B cell (primary cell): ENCODE measurements at regions of chr3 and their contacts with region 1.

Region 1: DNA sequence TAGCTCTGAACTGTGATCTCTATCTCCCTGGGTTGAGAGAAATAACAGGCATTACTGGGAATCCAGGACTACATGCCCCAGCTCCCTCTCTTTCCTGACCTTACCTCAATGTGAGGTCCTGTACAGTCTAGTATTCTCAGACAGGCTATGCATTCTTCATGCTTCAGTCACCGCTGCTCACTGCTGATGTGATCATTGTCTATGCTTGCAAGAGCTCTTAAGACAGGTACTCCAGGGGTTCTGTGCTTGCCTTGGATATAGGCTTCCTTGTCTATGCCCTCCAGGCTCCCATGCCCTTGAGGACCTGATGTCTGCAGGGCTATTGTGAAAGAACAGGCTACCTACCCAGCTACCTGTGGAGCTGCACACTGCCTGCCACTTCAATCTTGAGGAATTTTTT is 183.6 kb downstream of the MBNL1 start:
- DNase-seq: no peak
- ATAC-seq: no peak
- H3K4me3 ChIP-seq: no peak overlapping the region
- H3K4me3 Mint-ChIP-seq: no peak overlapping the region
- H3K27ac ChIP-seq: peak overlapping the region in 1 of 2 donors; percentile 55
- H3K27ac Mint-ChIP-seq: no peak overlapping the region
- H3K4me1 ChIP-seq: no peaks in the 10 kb centered on the region
- H3K4me1 Mint-ChIP-seq: peaks cover 12% of the 10 kb centered on the region
- H3K27me3 ChIP-seq: no peaks in the 10 kb centered on the region
- H3K27me3 Mint-ChIP-seq: no peaks in the 10 kb centered on the region
- CTCF ChIP-seq: no peak

Region 2: GRCh38 chr3:152281133-152281713 is 171.1 kb before region 1 on chr3:
- CTCF ChIA-PET with region 1: no interaction called
- POLR2A ChIA-PET with region 1: no interaction called
- intact Hi-C with region 1: no loop called
- DNase-seq: no peak
- ATAC-seq: no peak
- H3K4me3 ChIP-seq: peak overlapping the region in 1 of 5 experiments; percentile 5
- H3K4me3 Mint-ChIP-seq: peak overlapping the region; percentile 68
- H3K27ac ChIP-seq: peak overlapping the region in 1 of 2 donors; percentile 73
- H3K27ac Mint-ChIP-seq: peak overlapping the region; percentile 62
- H3K4me1 ChIP-seq: peaks cover 63 to 90% of the 10 kb centered on the region in 2 donors
- H3K4me1 Mint-ChIP-seq: peaks cover 79% of the 10 kb centered on the region
- H3K27me3 ChIP-seq: no peaks in the 10 kb centered on the region
- H3K27me3 Mint-ChIP-seq: no peaks in the 10 kb centered on the region
- CTCF ChIP-seq: no peak

Region 3: DNA sequence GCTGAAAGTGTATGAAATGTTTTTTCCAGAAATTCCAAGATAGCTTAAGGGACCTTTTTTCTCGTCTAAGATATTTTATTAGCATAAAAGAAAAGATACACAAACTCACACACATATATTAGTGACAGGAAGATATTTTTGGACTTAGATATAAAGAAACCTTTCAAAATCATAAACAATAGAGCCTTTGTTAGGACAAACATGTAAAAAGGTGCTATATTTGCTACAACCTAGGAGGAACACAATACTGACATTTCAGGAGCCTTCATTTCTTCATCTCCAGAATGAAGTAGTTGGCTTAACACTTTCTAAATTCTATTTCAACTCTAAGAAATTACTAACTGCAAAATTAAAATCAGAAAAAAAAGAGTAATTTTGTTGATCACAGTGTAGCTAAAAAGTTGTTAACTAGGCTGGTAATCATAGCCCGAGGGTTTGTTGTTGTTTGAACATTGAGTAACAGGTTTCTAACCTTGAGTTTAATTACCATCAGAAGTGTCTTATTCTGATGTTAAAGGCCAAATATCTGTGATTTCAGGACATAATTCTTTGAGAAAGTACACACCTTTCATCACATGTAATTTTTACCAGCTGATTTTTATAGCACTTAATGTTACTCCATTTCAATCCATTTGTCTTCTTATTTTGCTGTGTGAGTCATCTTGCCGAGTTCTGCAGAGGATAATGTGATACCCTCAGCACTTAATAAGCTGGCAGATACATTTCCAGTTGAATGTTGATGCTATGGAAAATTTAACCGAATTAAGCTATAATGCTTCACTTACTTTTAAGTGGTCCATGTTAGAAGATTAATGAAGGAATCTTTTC is 86.3 kb before region 1 on chr3:
- CTCF ChIA-PET with region 1: no interaction called
- POLR2A ChIA-PET with region 1: no interaction called
- intact Hi-C with region 1: no loop called
- DNase-seq: no peak
- ATAC-seq: no peak
- H3K4me3 ChIP-seq: no peak overlapping the region
- H3K4me3 Mint-ChIP-seq: no peak overlapping the region
- H3K27ac ChIP-seq: peak overlapping the region in 1 of 2 donors; percentile 11
- H3K27ac Mint-ChIP-seq: peak overlapping the region; percentile 12
- H3K4me1 ChIP-seq: peaks cover 7 to 25% of the 10 kb centered on the region in 2 donors
- H3K4me1 Mint-ChIP-seq: peaks cover 70% of the 10 kb centered on the region
- H3K27me3 ChIP-seq: no peaks in the 10 kb centered on the region
- H3K27me3 Mint-ChIP-seq: no peaks in the 10 kb centered on the region
- CTCF ChIP-seq: no peak

Region 4: DNA sequence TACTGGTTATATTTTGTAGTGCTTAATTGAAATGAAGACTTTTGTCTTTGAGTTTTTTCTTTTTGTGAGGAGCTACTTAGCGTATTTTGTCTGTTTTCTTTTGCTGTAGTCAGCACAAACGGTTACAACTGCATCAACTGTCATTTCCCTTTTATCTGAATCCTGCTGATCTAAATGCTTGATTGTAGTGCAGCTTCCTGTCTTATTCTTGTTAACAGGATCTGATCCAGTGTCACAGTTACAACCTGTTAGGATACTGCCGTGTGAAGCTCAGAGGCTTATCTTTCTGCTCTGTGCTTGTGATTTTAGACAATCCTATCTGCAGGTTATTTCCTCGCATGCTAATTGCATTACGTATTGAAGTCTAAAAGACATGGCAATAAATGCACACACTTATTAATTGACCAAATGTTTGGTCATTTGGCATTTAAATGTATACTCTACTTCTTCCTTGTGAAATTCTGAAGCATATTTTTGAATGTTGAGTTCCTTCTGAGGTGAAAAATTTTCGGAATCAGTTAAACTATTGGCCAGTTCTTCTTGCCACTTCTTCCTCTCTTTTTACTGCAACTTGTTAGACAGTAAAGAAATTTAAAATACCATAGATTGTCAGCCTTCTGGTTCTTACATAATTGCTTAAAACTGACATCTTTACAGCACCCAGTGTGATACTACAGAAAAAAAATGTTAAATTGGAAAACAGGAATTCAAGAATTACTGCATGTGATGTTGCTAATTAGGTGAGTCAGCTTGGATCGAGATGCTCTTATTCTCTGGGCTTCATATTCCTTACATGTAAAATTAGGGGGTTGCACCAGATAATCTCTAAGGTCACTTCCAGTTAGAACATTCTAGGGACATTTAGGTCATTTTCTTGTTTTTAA is 15.4 kb before region 1 on chr3:
- CTCF ChIA-PET with region 1: no interaction called
- POLR2A ChIA-PET with region 1: no interaction called
- intact Hi-C with region 1: loop called (anchors 1 kb)
- DNase-seq: no peak
- ATAC-seq: no peak
- H3K4me3 ChIP-seq: no peak overlapping the region
- H3K4me3 Mint-ChIP-seq: no peak overlapping the region
- H3K27ac ChIP-seq: peak overlapping the region in 1 of 2 donors; percentile 55
- H3K27ac Mint-ChIP-seq: peak overlapping the region; percentile 50
- H3K4me1 ChIP-seq: peaks cover 0 to 12% of the 10 kb centered on the region in 2 donors
- H3K4me1 Mint-ChIP-seq: peaks cover 56% of the 10 kb centered on the region
- H3K27me3 ChIP-seq: no peaks in the 10 kb centered on the region
- H3K27me3 Mint-ChIP-seq: no peaks in the 10 kb centered on the region
- CTCF ChIP-seq: no peak

Region 5: GRCh38 chr3:152857082-152857481 is 404.8 kb after region 1 on chr3:
- CTCF ChIA-PET with region 1: no interaction called
- POLR2A ChIA-PET with region 1: no interaction called
- intact Hi-C with region 1: no loop called
- DNase-seq: no peak
- ATAC-seq: no peak
- H3K4me3 ChIP-seq: no peak overlapping the region
- H3K4me3 Mint-ChIP-seq: no peak overlapping the region
- H3K27ac ChIP-seq: no peak overlapping the region
- H3K27ac Mint-ChIP-seq: no peak overlapping the region
- H3K4me1 ChIP-seq: no peaks in the 10 kb centered on the region
- H3K4me1 Mint-ChIP-seq: no peaks in the 10 kb centered on the region
- H3K27me3 ChIP-seq: peaks cover 0 to 3% (median under 1%) of the 10 kb centered on the region in 4 experiments
- H3K27me3 Mint-ChIP-seq: peaks cover 6% of the 10 kb centered on the region
- CTCF ChIP-seq: no peak